Gastrocnemius medialis (tissue), 4 donors: ENCODE measurements at regions of chr11 and their contacts with region 1.

Region 1: GRCh38 chr11:10878408-10879214 is 20.8 kb upstream of the ZBED5 start:
- DNase-seq: no peak
- ATAC-seq: peak in 1 of 2 donors; percentile 81
- H3K4me3 ChIP-seq: no peak overlapping the region
- H3K27ac ChIP-seq: peak overlapping the region in 1 of 4 donors; percentile 11
- H3K4me1 ChIP-seq: peaks cover 12 to 18% of the 10 kb centered on the region in 2 donors
- H3K27me3 ChIP-seq: no peaks in the 10 kb centered on the region
- CTCF ChIP-seq: peak; percentile 31 to 68 (median 57)
- POLR2A ChIP-seq: no peak

Region 2: DNA sequence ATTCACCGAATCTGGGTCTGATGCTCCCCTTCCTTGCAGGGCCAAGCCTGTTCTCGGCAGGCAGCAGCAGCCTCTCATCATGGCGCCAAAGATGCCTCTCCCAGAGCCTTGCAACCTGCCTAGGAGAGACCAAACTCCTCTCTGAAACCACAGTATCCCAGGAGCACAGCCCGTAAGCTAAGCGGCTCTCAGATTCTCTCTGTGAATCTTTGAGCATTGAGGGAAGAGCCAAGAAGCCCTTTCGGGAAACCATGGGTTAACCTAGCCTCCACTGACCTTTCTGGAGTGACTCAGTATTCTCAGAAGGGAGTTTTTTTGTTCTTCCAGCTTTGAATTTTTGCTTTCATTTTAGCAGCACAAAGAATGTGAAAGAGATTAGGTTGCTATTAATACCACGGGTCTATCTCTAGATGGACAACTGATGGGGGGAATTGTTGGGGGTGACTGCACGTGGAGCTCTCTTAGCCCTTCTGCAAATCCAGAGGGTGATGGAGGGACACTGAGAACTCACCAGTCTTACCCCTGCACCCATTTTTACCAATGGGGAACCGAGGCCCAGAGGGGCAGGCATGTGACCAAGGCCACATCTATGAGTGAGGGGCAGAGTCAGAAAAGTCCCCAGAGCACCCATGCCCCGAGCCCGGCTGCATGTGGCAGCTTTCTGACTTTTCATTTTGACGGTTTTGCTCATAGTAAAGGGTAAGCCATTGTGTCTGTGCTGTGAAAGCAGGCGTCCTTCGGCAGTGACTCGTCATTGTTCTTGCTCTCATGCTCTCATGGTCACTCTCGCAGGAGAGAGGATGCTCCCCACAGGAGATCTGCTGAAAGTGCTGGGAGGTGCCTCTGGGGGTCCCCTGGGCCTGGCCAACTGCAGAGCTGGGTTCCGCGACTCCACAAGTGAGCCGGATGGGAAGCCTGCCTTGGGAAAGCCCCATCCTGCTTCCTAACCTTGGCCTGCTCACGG is 221.0 kb before region 1 on chr11:
- in situ Hi-C with region 1: no loop called
- intact Hi-C with region 1: no loop called
- DNase-seq: no peak
- ATAC-seq: no peak
- H3K4me3 ChIP-seq: no peak overlapping the region
- H3K27ac ChIP-seq: peak overlapping the region; percentile 27 to 87 (median 76)
- H3K4me1 ChIP-seq: peaks cover 28 to 58% of the 10 kb centered on the region in 2 donors
- H3K27me3 ChIP-seq: no peaks in the 10 kb centered on the region
- CTCF ChIP-seq: no peak
- POLR2A ChIP-seq: no peak

Region 3: GRCh38 chr11:10893714-10894151 is 15.1 kb after region 1 on chr11:
- in situ Hi-C with region 1: no loop called
- intact Hi-C with region 1: loop called (anchors 2 kb)
- DNase-seq: no peak
- ATAC-seq: peak in 1 of 2 donors; percentile 23
- H3K4me3 ChIP-seq: no peak overlapping the region
- H3K27ac ChIP-seq: peak overlapping the region; percentile 59 to 96 (median 86)
- H3K4me1 ChIP-seq: peaks cover 34 to 52% of the 10 kb centered on the region in 2 donors
- H3K27me3 ChIP-seq: no peaks in the 10 kb centered on the region
- CTCF ChIP-seq: peak in 1 of 5 experiments; percentile 24
- POLR2A ChIP-seq: no peak